CD8-positive, alpha-beta T cell (primary cell): ENCODE measurements at regions of chr18 and their contacts with region 1.

Region 1: DNA sequence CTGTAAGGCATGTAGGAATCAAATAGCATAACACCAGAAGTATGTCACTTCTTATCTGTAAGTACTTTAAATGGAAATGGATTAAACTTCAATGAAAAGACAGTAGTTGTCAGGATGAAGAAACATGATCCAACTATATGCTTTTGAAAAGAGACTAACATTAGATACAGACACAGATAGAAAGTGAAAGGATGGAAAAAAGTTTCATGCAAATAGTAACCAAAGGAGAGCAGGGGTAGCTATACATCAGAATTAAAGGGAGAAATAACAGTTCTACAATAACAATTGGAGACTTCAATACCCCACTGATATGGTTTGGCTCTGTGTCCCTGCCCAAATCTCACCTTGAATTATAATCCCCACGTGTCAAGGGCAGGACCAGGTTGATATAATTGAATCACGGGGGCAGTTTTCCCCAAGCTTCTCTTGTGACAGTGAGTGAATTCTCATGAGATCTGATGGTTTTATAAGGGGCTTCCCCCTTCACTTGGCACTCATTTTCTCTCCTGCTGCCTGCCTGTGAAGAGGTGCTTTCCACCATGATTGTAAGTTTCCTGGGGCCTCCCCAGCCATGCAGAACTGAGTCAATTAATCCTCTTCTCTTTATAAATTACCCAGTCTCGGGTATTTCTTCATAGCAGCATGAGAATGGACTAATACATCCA is 205.4 kb upstream of the CDH2 start:
- DNase-seq: no peak
- ATAC-seq: no peak
- H3K4me3 ChIP-seq: no peak overlapping the region
- H3K4me3 Mint-ChIP-seq: no peak overlapping the region
- H3K27ac ChIP-seq: no peak overlapping the region
- H3K27ac Mint-ChIP-seq: no peak overlapping the region
- H3K4me1 ChIP-seq: no peaks in the 10 kb centered on the region
- H3K4me1 Mint-ChIP-seq: no peaks in the 10 kb centered on the region
- H3K27me3 ChIP-seq: no peaks in the 10 kb centered on the region
- H3K27me3 Mint-ChIP-seq: no peaks in the 10 kb centered on the region
- CTCF ChIP-seq: no peak

Region 2: GRCh38 chr18:27931535-27931934 is 450.8 kb before region 1 on chr18:
- CTCF ChIA-PET with region 1: no interaction called
- POLR2A ChIA-PET with region 1: no interaction called
- intact Hi-C with region 1: loop called in 1 of 2 experiments (anchors 10 kb)
- DNase-seq: no peak
- ATAC-seq: no peak
- H3K4me3 ChIP-seq: no peak overlapping the region
- H3K4me3 Mint-ChIP-seq: no peak overlapping the region
- H3K27ac ChIP-seq: no peak overlapping the region
- H3K27ac Mint-ChIP-seq: no peak overlapping the region
- H3K4me1 ChIP-seq: no peaks in the 10 kb centered on the region
- H3K4me1 Mint-ChIP-seq: no peaks in the 10 kb centered on the region
- H3K27me3 ChIP-seq: no peaks in the 10 kb centered on the region
- H3K27me3 Mint-ChIP-seq: no peaks in the 10 kb centered on the region
- CTCF ChIP-seq: no peak

Region 3: GRCh38 chr18:28350821-28351220 is 31.5 kb before region 1 on chr18:
- CTCF ChIA-PET with region 1: no interaction called
- POLR2A ChIA-PET with region 1: no interaction called
- intact Hi-C with region 1: no loop called
- DNase-seq: no peak
- ATAC-seq: no peak
- H3K4me3 ChIP-seq: no peak overlapping the region
- H3K4me3 Mint-ChIP-seq: no peak overlapping the region
- H3K27ac ChIP-seq: no peak overlapping the region
- H3K27ac Mint-ChIP-seq: no peak overlapping the region
- H3K4me1 ChIP-seq: no peaks in the 10 kb centered on the region
- H3K4me1 Mint-ChIP-seq: no peaks in the 10 kb centered on the region
- H3K27me3 ChIP-seq: no peaks in the 10 kb centered on the region
- H3K27me3 Mint-ChIP-seq: no peaks in the 10 kb centered on the region
- CTCF ChIP-seq: no peak

Region 4: GRCh38 chr18:28432339-28432738 is 50.0 kb after region 1 on chr18:
- CTCF ChIA-PET with region 1: no interaction called
- POLR2A ChIA-PET with region 1: no interaction called
- intact Hi-C with region 1: no loop called
- DNase-seq: no peak
- ATAC-seq: no peak
- H3K4me3 ChIP-seq: no peak overlapping the region
- H3K4me3 Mint-ChIP-seq: no peak overlapping the region
- H3K27ac ChIP-seq: no peak overlapping the region
- H3K27ac Mint-ChIP-seq: no peak overlapping the region
- H3K4me1 ChIP-seq: no peaks in the 10 kb centered on the region
- H3K4me1 Mint-ChIP-seq: no peaks in the 10 kb centered on the region
- H3K27me3 ChIP-seq: no peaks in the 10 kb centered on the region
- H3K27me3 Mint-ChIP-seq: no peaks in the 10 kb centered on the region
- CTCF ChIP-seq: no peak

Region 5: GRCh38 chr18:28576941-28577340 is 194.6 kb after region 1 on chr18:
- CTCF ChIA-PET with region 1: no interaction called
- POLR2A ChIA-PET with region 1: no interaction called
- intact Hi-C with region 1: loop called in 1 of 2 experiments (anchors 10 kb)
- DNase-seq: no peak
- ATAC-seq: no peak
- H3K4me3 ChIP-seq: no peak overlapping the region
- H3K4me3 Mint-ChIP-seq: no peak overlapping the region
- H3K27ac ChIP-seq: no peak overlapping the region
- H3K27ac Mint-ChIP-seq: no peak overlapping the region
- H3K4me1 ChIP-seq: no peaks in the 10 kb centered on the region
- H3K4me1 Mint-ChIP-seq: no peaks in the 10 kb centered on the region
- H3K27me3 ChIP-seq: no peaks in the 10 kb centered on the region
- H3K27me3 Mint-ChIP-seq: no peaks in the 10 kb centered on the region
- CTCF ChIP-seq: no peak